ENCODE measurements at regions of chr3 and their contacts with region 1.

Region 1: GRCh38 chr3:157104928-157105652 is 54.9 kb downstream of the CCNL1 start:
- DNase-seq: no peak
- H3K4me3 Mint-ChIP-seq: no peak overlapping the region
- H3K27ac Mint-ChIP-seq: no peak overlapping the region
- H3K4me1 Mint-ChIP-seq: peaks cover 32% of the 10 kb centered on the region
- H3K27me3 Mint-ChIP-seq: no peaks in the 10 kb centered on the region

Region 2: DNA sequence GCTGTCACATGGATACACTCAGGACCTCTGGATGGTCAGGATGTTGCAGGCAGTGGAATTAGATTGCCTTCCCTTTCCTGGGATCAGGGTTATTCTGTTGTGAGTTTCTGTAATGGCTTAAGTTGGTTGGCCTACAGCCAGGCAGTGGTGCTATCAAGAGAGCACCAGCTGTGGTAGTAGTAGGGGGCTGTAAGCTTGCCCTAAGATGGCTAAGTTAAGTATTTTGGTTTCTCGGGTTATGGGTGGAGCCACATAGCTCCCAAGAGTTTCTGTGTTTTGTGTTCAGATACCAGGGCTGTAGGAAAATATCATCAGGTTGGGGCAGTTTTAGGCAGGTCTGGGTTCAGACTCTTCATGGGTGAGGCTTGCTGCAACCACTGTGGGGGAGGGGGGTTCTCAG is 219.3 kb before region 1 on chr3:
- CTCF ChIA-PET with region 1: no interaction called
- POLR2A ChIA-PET with region 1: no interaction called
- DNase-seq: no peak
- H3K4me3 Mint-ChIP-seq: no peak overlapping the region
- H3K27ac Mint-ChIP-seq: no peak overlapping the region
- H3K4me1 Mint-ChIP-seq: no peaks in the 10 kb centered on the region
- H3K27me3 Mint-ChIP-seq: peaks cover 19% of the 10 kb centered on the region

Region 3: GRCh38 chr3:157064402-157064801 is 40.7 kb before region 1 on chr3:
- CTCF ChIA-PET with region 1: no interaction called
- POLR2A ChIA-PET with region 1: no interaction called
- DNase-seq: no peak
- H3K4me3 Mint-ChIP-seq: no peak overlapping the region
- H3K27ac Mint-ChIP-seq: peak overlapping the region; percentile 43
- H3K4me1 Mint-ChIP-seq: peaks cover 46% of the 10 kb centered on the region
- H3K27me3 Mint-ChIP-seq: peaks cover 6% of the 10 kb centered on the region

Region 4: GRCh38 chr3:157088601-157089454 is 16.3 kb before region 1 on chr3:
- CTCF ChIA-PET with region 1: interaction called, 19 read pairs
- POLR2A ChIA-PET with region 1: interaction called, 3 read pairs
- DNase-seq: peak; percentile 94
- H3K4me3 Mint-ChIP-seq: peak overlapping the region; percentile 80
- H3K27ac Mint-ChIP-seq: peak overlapping the region; percentile 94
- H3K4me1 Mint-ChIP-seq: peaks cover 70% of the 10 kb centered on the region
- H3K27me3 Mint-ChIP-seq: no peaks in the 10 kb centered on the region

Region 5: DNA sequence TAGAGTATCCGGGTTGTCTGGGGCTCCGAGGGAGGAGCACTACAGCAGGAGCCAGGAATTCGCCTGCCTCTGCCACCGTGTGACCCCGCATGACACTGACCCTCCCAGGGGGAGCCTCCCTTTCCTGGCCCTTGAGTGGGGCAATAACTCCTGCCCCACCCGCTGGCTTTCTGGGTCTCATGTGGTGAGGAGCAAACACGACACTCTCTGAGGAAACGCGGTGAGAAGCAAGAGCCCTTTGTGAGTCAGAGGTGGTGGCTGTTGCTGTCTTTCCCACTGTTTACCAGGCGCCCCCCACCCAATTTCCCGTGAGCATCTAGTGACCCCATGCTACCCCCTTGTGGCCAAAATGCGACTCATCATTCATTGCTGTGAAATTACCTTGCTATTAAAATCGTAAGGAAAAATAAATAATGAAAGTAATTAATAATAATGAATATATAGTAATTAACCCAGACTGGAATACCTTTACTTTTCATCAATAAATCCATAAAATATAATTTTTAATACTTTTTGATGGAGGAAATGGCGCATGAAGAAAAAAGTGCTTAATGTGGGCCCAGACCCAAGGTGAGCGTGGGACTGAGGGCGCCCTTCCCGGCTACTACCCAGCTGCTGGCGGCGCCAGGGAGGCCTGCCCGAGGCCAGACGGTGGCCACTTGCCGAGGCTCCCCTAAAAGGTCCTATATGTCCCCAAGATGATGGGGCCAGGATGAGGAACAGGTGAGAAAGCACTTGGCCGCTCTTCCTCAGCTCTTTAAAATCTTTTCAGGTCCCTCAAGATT is 25.6 kb after region 1 on chr3:
- CTCF ChIA-PET with region 1: interaction called, 160 read pairs
- POLR2A ChIA-PET with region 1: no interaction called
- DNase-seq: peak; percentile 85
- H3K4me3 Mint-ChIP-seq: peak overlapping the region; percentile 52
- H3K27ac Mint-ChIP-seq: peak overlapping the region; percentile 97
- H3K4me1 Mint-ChIP-seq: peaks cover 97% of the 10 kb centered on the region
- H3K27me3 Mint-ChIP-seq: no peaks in the 10 kb centered on the region